Left ventricle myocardium superior (tissue), 1 donor: ENCODE measurements at regions of chr3 and their contacts with region 1.

Region 1: DNA sequence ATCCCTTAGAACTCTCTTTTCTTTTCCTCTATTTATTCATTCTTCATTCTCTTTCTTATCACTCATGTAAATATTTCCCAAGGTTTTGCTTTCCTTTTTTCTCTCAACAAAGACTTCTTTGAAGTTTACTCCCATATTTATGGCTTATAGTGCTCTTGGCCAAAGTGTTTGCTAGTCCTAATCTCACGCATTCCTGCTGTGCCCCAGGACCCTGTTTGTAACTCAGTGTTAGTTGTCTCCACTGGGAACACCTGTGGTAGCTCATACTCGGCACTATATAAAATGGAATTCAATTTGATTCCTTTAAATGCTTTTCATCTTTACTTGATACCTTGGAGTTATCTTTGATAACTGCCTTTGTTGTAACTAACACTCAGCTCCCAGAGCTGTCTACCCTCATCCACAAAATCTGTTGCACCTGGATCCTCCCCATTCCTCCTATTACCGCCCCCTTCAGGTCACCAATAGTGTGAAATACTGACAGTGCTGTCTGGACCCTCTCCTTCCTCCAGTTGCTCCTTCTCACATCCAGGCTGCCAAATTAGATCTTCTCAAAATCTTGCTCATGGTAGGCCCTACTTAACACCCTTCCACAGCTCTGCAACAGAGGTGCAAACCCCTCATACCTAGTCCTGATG is 76.8 kb downstream of the TIGIT start:
- DNase-seq: no peak
- ATAC-seq: no peak

Region 2: GRCh38 chr3:114319453-114319852 is 51.2 kb before region 1 on chr3:
- intact Hi-C with region 1: no loop called
- DNase-seq: no peak
- ATAC-seq: no peak

Region 3: DNA sequence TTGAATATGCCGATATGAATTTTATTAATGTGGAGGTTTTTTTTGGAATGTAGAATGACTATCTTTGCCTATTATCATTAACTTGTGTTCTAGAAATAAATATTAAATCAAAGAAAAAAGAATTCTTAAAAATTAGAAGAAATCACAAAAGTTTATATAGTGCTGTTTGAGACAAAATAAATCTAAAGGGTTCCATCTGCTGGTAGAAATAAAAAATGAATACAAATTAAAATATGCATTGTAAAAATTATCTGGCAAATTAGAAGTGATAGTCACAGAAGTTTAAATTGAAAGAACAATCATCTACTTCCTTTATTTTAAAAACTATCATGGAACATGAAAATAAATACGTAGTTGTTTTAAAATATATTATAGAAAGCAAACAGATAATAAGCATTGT is 799.2 kb after region 1 on chr3:
- intact Hi-C with region 1: loop called (anchors 10 kb)
- DNase-seq: no peak
- ATAC-seq: no peak